Mammary epithelial cell (primary cell): ENCODE measurements at regions of chr1 and their contacts with region 1.

Region 1: GRCh38 chr1:84936116-84936810 is 43.3 kb upstream of the LPAR3 start:
- DNase-seq: peak; percentile 54
- H3K4me3 ChIP-seq: no peak overlapping the region
- H3K27ac ChIP-seq: no peak overlapping the region
- H3K4me1 ChIP-seq: peaks cover 13% of the 10 kb centered on the region
- H3K27me3 ChIP-seq: no peaks in the 10 kb centered on the region
- CTCF ChIP-seq: peak; percentile 91 to 99

Region 2: DNA sequence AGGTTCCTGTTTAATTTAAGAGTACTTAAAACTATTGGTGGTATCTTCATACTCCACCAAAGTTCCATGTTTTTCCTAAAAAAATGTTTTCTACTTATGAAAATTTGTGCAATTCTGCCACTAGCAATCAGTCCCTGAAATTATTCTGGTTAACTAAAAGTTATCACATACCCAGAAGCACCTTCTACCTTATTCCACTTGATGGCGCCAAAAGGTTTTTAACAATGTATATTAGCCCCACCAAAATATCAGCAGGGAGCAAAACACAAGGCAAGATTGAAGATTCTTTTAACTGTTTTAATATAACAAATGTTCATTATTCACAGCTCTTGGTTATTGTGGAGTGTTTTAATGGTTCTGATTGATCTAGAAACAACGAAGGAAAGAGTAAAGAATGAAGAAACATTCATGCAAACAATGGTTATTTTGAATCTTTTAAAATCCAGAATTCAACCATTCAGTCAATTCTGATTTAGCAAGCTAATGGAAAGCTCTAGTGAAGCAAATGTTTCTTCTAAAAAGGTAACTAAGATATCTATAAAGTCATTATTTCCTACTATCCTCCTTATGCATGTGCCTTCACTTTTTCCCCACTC is 1004.5 kb before region 1 on chr1:
- CTCF ChIA-PET with region 1: no interaction called
- dilution Hi-C with region 1: no loop called
- in situ Hi-C with region 1: no loop called
- intact Hi-C with region 1: loop called (anchors 10 kb)
- DNase-seq: peak; percentile 16
- H3K4me3 ChIP-seq: no peak overlapping the region
- H3K27ac ChIP-seq: no peak overlapping the region
- H3K4me1 ChIP-seq: no peaks in the 10 kb centered on the region
- H3K27me3 ChIP-seq: no peaks in the 10 kb centered on the region
- CTCF ChIP-seq: peak; percentile 67 to 75

Region 3: GRCh38 chr1:84433258-84434080 is 502.8 kb before region 1 on chr1:
- CTCF ChIA-PET with region 1: no interaction called
- dilution Hi-C with region 1: no loop called
- in situ Hi-C with region 1: loop called in 1 of 2 experiments (anchors 10 kb)
- intact Hi-C with region 1: no loop called
- DNase-seq: peak; percentile 61
- H3K4me3 ChIP-seq: no peak overlapping the region
- H3K27ac ChIP-seq: peak overlapping the region; percentile 33
- H3K4me1 ChIP-seq: peaks cover 16% of the 10 kb centered on the region
- H3K27me3 ChIP-seq: no peaks in the 10 kb centered on the region
- CTCF ChIP-seq: peak; percentile 66 to 73

Region 4: DNA sequence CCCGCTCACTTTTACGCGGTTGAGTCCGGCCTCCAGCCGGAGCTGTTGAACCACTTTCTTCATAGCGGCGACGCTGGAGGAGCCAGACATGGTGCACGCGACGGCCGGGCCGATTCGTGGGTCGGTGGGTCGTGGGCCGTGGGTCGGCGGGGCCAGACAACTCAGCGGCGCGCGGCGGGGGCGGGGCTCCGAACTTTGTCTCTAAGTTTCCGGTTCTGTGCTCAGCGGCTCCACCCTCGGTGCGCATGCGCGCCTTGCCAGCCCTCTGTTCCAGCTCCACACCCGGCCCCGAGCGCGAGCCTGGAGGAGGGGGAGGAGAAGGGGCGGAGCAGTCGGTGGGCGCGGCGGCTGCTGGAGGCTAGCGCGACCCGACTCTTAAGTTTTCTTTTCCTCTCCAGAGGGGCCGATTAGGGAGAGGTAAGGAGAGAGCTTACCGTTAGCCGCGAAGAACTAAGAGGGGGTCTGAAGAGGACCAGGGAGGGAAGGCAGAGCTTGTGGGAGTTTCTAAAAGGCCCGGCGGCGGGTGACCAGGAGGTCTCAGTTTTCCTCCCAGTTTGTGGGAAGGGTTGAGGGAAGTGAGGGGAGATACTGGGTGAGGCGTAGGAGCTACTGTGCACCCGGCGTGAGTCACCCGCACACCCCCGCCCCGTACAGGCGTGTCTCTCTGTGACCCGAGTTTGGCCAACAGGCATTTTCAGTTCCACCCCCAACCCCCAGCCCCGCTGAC is 430.1 kb before region 1 on chr1 and contains the starts of genes GNG5 and SPATA1:
- CTCF ChIA-PET with region 1: no interaction called
- dilution Hi-C with region 1: no loop called
- in situ Hi-C with region 1: no loop called
- intact Hi-C with region 1: loop called (anchors 5 kb)
- DNase-seq: peak; percentile 95
- H3K4me3 ChIP-seq: peak within 1 kb of the TSS; percentile 85 to 98 (median 95)
- H3K27ac ChIP-seq: peak within 1 kb of the TSS; percentile 92
- H3K4me1 ChIP-seq: peaks cover 16% of the 10 kb centered on the region
- H3K27me3 ChIP-seq: no peaks in the 10 kb centered on the region
- CTCF ChIP-seq: no peak
- total RNA-seq, gene GNG5: 20.5 to 115 TPM
- total RNA-seq, gene SPATA1: 0.33 to 1.4 TPM

Region 5: DNA sequence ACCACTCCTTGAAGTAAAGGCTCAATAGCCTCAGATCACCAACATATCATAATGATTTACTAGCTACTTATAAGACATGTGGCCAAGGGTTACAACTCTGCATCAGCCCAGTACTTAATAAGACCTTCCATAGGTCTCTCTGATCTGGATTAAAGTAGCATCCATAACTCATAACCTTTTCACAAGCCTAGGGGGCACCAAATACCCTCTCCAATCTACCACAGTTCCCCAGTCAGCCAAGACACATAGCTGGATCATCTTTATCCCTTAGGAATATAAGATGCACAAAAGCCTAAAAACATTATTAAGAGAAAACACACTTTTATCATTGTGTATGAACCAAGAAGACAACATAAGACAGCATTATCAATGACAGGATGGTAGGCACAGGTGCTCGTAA is 268.1 kb before region 1 on chr1:
- CTCF ChIA-PET with region 1: no interaction called
- dilution Hi-C with region 1: no loop called
- in situ Hi-C with region 1: no loop called
- intact Hi-C with region 1: loop called (anchors 10 kb)
- DNase-seq: no peak
- H3K4me3 ChIP-seq: no peak overlapping the region
- H3K27ac ChIP-seq: no peak overlapping the region
- H3K4me1 ChIP-seq: no peaks in the 10 kb centered on the region
- H3K27me3 ChIP-seq: no peaks in the 10 kb centered on the region
- CTCF ChIP-seq: peak; percentile 7 to 31

Region 6: GRCh38 chr1:84772428-84772943 is 163.8 kb before region 1 on chr1:
- CTCF ChIA-PET with region 1: no interaction called
- dilution Hi-C with region 1: loop called (anchors 5 kb)
- in situ Hi-C with region 1: loop called (anchors 5 kb)
- intact Hi-C with region 1: loop called (anchors 1 kb)
- DNase-seq: peak; percentile 78
- H3K4me3 ChIP-seq: no peak overlapping the region
- H3K27ac ChIP-seq: peak overlapping the region; percentile 20
- H3K4me1 ChIP-seq: peaks cover 17% of the 10 kb centered on the region
- H3K27me3 ChIP-seq: no peaks in the 10 kb centered on the region
- CTCF ChIP-seq: peak; percentile 91 to 95

Region 7: GRCh38 chr1:84887261-84887934 is 48.9 kb before region 1 on chr1:
- CTCF ChIA-PET with region 1: no interaction called
- dilution Hi-C with region 1: no loop called
- in situ Hi-C with region 1: no loop called
- intact Hi-C with region 1: loop called (anchors 2 kb)
- DNase-seq: peak; percentile 94
- H3K4me3 ChIP-seq: peak overlapping the region in 1 of 3 experiments; percentile 3
- H3K27ac ChIP-seq: peak overlapping the region; percentile 92
- H3K4me1 ChIP-seq: peaks cover 45% of the 10 kb centered on the region
- H3K27me3 ChIP-seq: no peaks in the 10 kb centered on the region
- CTCF ChIP-seq: no peak